ENCODE measurements at regions of chr11 and their contacts with region 1.

Region 1: DNA sequence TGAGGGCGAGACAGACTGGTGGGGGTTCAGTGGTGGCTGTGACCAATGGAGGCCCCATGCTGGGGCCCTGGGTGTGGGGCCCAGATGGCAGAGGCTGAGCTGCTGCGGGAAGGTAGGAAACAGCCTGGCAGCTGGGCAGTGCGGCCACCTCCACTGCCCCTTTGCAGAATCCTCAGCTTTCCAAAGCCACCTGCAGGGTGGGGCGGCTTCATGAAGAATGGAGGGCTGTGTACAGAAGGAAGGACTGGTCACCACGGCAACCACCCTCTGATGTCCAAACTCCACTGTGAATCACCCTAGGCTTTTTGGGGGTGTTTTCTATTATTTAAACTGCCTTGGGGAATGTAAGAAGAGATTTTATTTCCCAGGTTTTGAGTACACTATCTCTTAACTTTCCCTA is 166.3 kb upstream of the NAV2 start:
- DNase-seq: no peak
- H3K4me3 ChIP-seq: no peak overlapping the region
- H3K27ac ChIP-seq: no peak overlapping the region
- H3K4me1 ChIP-seq: no peaks in the 10 kb centered on the region
- H3K27me3 ChIP-seq: no peaks in the 10 kb centered on the region
- CTCF ChIP-seq: no peak
- EP300 ChIP-seq: no peak
- POLR2A ChIP-seq: no peak

Region 2: DNA sequence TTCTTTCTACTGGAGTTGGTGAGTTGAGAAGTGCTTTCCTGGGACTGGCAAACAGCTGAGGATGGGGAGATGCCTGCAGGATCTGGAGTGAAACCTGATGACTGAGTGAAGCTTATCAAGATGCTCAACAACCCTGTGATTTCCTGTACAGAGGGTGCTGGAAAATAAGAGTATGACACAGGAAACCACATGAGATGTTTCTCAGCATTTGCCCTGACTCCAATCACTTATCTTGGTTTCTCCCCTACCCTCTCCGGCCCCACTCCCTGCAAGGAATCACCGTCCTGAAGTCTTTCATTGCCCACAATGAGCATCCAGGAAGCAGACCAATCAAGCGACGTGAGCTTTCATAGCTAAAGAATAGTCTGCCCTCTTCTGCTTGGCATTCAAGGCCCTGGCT is 485.7 kb before region 1 on chr11 and contains the start of gene MRGPRX2:
- in situ Hi-C with region 1: loop called in 3 of 4 experiments (anchors 10 to 25 kb)
- intact Hi-C with region 1: loop called (anchors 10 kb)
- DNase-seq: no peak
- H3K4me3 ChIP-seq: no peak within 1 kb of the TSS
- H3K27ac ChIP-seq: no peak within 1 kb of the TSS
- H3K4me1 ChIP-seq: no peaks in the 10 kb centered on the region
- H3K27me3 ChIP-seq: no peaks in the 10 kb centered on the region
- CTCF ChIP-seq: no peak
- EP300 ChIP-seq: no peak
- POLR2A ChIP-seq: no peak
- total RNA-seq, gene MRGPRX2: not detected

Region 3: GRCh38 chr11:19428206-19429002 is 117.9 kb before region 1 on chr11:
- in situ Hi-C with region 1: no loop called
- intact Hi-C with region 1: no loop called
- DNase-seq: no peak
- H3K4me3 ChIP-seq: no peak overlapping the region
- H3K27ac ChIP-seq: no peak overlapping the region
- H3K4me1 ChIP-seq: no peaks in the 10 kb centered on the region
- H3K27me3 ChIP-seq: peaks cover 15% of the 10 kb centered on the region
- CTCF ChIP-seq: no peak
- EP300 ChIP-seq: no peak
- POLR2A ChIP-seq: no peak

Region 4: GRCh38 chr11:19499026-19499669 is 47.2 kb before region 1 on chr11:
- in situ Hi-C with region 1: no loop called
- intact Hi-C with region 1: loop called (anchors 1 kb)
- DNase-seq: no peak
- H3K4me3 ChIP-seq: no peak overlapping the region
- H3K27ac ChIP-seq: no peak overlapping the region
- H3K4me1 ChIP-seq: no peaks in the 10 kb centered on the region
- H3K27me3 ChIP-seq: no peaks in the 10 kb centered on the region
- CTCF ChIP-seq: no peak
- EP300 ChIP-seq: no peak
- POLR2A ChIP-seq: no peak

Measured in transverse colon (tissue), 4 donors.